ENCODE measurements at regions of chr2 and their contacts with region 1.

Region 1: DNA sequence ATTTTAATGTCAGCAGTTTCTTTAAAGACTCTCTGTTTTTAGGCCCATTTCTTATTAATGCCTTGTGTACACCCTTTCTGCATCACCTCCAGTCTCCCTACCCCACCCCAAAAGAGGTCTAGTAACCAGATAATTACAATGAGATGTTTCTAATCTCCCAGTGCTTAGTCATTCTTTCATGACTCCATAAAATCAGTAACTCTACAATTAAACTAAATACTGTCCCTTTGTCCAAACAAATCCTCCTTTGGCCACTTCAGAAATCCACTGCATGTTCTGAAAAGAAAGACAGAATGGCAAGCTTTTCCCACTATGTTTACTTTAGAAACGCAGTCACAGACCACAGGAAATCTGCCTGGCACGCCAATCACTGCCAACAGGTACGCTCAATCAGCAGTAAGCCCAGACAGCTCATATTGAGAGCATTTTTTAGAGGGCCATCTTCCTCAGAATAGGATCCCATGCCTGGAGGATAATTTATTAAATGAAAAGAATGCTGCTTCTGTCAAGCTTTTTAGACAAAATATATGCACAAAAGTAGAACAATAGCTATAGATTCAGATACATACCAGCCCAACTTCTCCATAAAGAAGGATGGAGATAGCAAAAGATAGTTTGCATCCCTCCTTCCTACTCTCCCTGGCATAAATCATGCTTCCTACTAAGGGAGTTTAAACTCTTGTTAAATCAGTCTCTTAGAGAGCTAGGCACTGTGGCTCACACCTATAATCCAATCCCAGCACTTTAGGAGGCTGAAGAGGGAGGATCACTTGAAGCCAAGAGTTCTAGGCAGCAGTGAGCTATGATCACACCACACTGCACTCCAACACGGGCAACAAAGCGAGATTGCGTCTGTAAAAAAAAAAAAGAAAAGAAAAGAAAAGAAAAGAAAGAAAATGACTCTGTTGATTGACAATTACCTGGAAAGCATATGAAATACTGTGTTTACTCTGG is 14.6 kb downstream of the CLASP1 start:
- DNase-seq: peak; percentile 81
- H3K4me3 ChIP-seq: no peak overlapping the region
- H3K27ac ChIP-seq: peak overlapping the region; percentile 86
- H3K4me1 ChIP-seq: peaks cover 31% of the 10 kb centered on the region
- H3K27me3 ChIP-seq: no peaks in the 10 kb centered on the region
- CTCF ChIP-seq: no peak

Region 2: GRCh38 chr2:121596221-121597080 is 38.2 kb before region 1 on chr2:
- CTCF ChIA-PET with region 1: no interaction called
- dilution Hi-C with region 1: no loop called
- in situ Hi-C with region 1: no loop called
- intact Hi-C with region 1: no loop called
- DNase-seq: peak; percentile 36
- H3K4me3 ChIP-seq: no peak overlapping the region
- H3K27ac ChIP-seq: no peak overlapping the region
- H3K4me1 ChIP-seq: peaks cover 18% of the 10 kb centered on the region
- H3K27me3 ChIP-seq: no peaks in the 10 kb centered on the region
- CTCF ChIP-seq: peak; percentile 17 to 66

Region 3: DNA sequence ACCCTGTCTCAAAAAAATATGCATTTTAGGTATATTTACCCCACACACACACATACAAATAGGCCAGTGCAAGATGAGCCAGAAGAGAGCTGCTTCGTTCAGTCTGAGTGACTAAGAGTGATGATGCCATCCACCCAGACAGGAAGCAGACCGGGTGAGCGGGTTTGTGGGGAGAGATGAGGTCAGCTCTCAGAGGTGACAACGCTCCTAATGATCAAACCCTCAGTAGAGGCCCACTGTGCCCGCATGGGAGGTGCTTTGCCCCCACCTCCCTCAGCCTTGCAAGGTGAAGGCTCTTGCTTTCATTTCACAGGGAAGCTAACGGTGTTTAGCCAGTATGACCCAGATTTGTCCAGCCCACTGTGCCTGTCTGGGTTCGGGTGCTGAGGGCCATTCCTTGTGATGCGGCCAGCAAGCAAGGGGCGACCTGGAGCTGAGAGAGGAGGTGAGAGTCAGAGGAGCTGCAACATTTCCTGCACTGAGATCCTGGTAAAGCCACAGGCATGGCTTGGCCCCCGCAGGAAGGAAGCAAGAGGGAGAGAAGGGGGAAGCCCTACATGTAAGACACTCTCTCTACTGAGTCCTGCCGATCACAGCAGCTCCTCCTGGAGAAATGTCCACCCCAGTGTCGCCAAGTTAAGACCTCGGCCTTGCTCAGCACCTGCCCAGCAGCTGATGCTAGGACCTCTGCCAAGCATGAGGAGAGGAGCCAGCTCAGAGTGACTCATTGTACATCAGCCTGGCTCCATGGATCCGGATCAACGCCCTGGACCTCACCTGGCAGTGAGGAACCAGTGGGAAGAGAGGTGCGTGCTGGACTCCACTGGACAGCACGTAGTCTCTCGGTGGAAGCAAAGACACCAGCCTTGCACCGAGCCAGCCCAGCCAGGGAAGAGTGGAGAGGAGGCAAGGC is 65.0 kb after region 1 on chr2:
- CTCF ChIA-PET with region 1: interaction called, 12 read pairs
- dilution Hi-C with region 1: no loop called
- in situ Hi-C with region 1: no loop called
- intact Hi-C with region 1: no loop called
- DNase-seq: peak; percentile 94
- H3K4me3 ChIP-seq: no peak overlapping the region
- H3K27ac ChIP-seq: peak overlapping the region; percentile 87
- H3K4me1 ChIP-seq: peaks cover 57% of the 10 kb centered on the region
- H3K27me3 ChIP-seq: no peaks in the 10 kb centered on the region
- CTCF ChIP-seq: no peak

Measured in mammary epithelial cell (primary cell).